ENCODE measurements at regions of chr12 and their contacts with region 1.

Region 1: DNA sequence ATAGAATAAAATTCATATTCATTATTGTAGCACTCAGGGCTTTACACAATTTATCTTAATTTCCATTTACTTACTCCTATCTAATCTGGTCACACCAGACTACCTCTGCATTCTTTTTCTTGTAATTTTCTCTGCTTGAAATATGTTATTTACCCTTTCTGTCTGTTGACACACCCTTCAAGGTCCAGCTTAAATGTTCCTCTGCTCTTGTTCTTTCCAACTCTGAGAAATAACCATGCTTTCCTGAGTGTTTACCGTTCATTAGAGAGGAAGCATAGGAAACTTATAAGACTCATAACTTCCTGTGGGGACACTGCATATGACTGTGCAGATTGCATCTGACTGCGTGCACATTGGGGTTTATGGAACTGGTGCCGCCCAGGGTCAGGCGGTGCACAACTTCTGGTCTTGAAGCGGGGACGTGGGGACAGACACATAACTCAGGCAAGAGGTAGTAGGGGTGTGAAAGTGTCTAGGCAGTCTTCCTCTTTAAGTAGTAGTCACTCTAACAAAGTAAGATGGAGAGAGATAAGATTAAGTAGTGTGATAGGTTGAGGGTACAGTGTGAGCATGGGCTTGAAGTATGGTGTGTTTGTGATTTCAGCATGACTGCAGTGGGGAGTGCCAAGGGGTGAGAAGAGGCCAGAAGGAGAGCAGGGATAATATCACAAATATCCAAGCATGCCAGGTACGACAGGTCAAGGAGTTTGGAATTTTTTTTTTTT is 42.5 kb upstream of the FOXJ2 start:
- H3K4me3 Mint-ChIP-seq: peak overlapping the region; percentile 45
- H3K27ac Mint-ChIP-seq: peak overlapping the region; percentile 79
- H3K4me1 Mint-ChIP-seq: peaks cover 32% of the 10 kb centered on the region
- H3K27me3 Mint-ChIP-seq: no peaks in the 10 kb centered on the region

Region 2: DNA sequence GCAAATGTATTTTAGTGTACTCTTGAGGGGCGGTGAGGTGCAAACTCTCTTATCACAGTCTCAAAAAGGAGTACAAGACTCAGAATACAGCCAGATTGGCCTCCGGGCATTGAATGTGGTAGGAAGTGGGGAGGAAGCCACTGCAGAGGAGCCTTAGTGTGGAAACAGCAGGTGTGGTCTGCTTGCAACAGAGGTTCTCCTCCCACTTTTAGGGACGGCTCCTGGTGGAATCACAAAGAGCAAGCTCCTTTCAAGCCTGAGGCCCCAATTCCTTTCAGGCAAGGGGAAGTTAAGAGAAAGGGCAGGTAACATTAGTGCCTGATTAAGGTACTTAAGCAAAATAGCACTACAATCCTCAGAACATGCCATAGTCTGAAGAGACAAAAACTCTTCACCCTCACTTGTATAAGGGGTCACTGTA is 30.3 kb before region 1 on chr12:
- intact Hi-C with region 1: loop called (anchors 2 kb)
- H3K4me3 Mint-ChIP-seq: peak overlapping the region; percentile 91
- H3K27ac Mint-ChIP-seq: peak overlapping the region; percentile 88
- H3K4me1 Mint-ChIP-seq: peaks cover 53% of the 10 kb centered on the region
- H3K27me3 Mint-ChIP-seq: no peaks in the 10 kb centered on the region

Region 3: GRCh38 chr12:7970475-7971252 is 19.3 kb before region 1 on chr12:
- intact Hi-C with region 1: loop called (anchors 2 kb)
- H3K4me3 Mint-ChIP-seq: peak overlapping the region; percentile 92
- H3K27ac Mint-ChIP-seq: peak overlapping the region; percentile 79
- H3K4me1 Mint-ChIP-seq: peaks cover 43% of the 10 kb centered on the region
- H3K27me3 Mint-ChIP-seq: no peaks in the 10 kb centered on the region

Region 4: GRCh38 chr12:8011331-8011730 is 21.3 kb after region 1 on chr12:
- intact Hi-C with region 1: no loop called
- H3K4me3 Mint-ChIP-seq: no peak overlapping the region
- H3K27ac Mint-ChIP-seq: no peak overlapping the region
- H3K4me1 Mint-ChIP-seq: peaks cover 5% of the 10 kb centered on the region
- H3K27me3 Mint-ChIP-seq: peaks cover 4% of the 10 kb centered on the region

Measured in dendritic cell treated with granulocyte-macrophage colony-stimulating factor and Interleukin-4, amounts not matched to agents 40 ng/mL and 50 ng/mL, for 4 days (primary cell).